Tibial artery (tissue), 4 donors: ENCODE measurements at regions of chr17 and their contacts with region 1.

Region 1: DNA sequence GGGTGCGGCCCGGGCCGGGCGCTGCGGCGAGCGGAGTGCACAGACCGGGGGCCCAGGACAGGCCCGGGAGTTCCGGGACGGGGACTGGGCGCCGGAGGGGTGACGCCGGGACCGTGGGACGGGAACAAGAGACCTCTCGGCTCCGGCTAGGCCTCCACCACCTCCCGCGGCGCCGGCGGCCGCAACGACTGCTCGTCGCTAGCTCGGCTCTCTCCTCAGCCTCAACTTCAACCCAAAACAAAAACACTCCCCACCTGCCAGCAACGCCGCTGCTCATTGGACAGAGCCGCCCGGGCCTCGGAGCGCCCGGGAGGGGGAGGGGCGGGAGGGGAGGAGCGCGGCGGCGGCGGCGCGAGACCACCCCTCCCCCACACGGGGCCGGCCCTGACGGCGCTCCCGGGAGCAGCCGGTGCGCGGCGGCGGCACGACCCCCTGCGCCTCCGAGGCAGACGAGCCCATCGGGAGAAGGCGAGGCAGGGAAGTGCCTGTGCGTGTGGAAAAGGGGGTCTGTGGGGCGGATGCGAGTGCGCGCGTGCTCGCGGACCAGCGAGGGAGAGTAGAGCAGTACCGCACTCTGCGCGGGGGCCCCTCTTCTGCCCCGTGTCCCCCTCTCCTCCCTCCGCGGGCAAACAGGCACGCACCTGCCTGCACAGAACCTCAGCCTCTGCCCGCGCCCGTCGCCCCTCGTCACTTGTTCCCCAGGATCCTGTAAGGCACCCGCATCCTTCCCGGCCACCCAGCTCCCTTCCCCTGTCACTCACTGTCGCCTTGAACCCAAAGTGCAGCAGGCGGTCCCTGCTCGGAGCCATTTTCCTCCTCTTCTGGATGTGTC is at the start of gene FBXL20:
- DNase-seq: peak; percentile 95 to 96
- H3K4me3 ChIP-seq: peak within 1 kb of the TSS; percentile 85
- H3K27ac ChIP-seq: peak within 1 kb of the TSS; percentile 90 to 97
- H3K4me1 ChIP-seq: peaks cover 0 to 35% (median 15%) of the 10 kb centered on the region in 4 donors
- H3K27me3 ChIP-seq: no peaks in the 10 kb centered on the region
- CTCF ChIP-seq: no peak

Region 2: GRCh38 chr17:39252788-39253460 is 148.7 kb before region 1 on chr17:
- intact Hi-C with region 1: loop called (anchors 10 kb)
- DNase-seq: peak in 1 of 2 donors; percentile 20
- H3K4me3 ChIP-seq: no peak overlapping the region
- H3K27ac ChIP-seq: no peak overlapping the region
- H3K4me1 ChIP-seq: no peaks in the 10 kb centered on the region
- H3K27me3 ChIP-seq: no peaks in the 10 kb centered on the region
- CTCF ChIP-seq: no peak

Region 3: GRCh38 chr17:39450847-39451581 is 49.4 kb after region 1 on chr17 and contains the start of gene MED1:
- intact Hi-C with region 1: loop called (anchors 10 kb)
- DNase-seq: peak; percentile 93 to 96
- H3K4me3 ChIP-seq: peak within 1 kb of the TSS; percentile 73 to 88
- H3K27ac ChIP-seq: peak within 1 kb of the TSS; percentile 88 to 91
- H3K4me1 ChIP-seq: peaks cover 0 to 29% (median 14%) of the 10 kb centered on the region in 4 donors
- H3K27me3 ChIP-seq: no peaks in the 10 kb centered on the region
- CTCF ChIP-seq: no peak

Region 4: DNA sequence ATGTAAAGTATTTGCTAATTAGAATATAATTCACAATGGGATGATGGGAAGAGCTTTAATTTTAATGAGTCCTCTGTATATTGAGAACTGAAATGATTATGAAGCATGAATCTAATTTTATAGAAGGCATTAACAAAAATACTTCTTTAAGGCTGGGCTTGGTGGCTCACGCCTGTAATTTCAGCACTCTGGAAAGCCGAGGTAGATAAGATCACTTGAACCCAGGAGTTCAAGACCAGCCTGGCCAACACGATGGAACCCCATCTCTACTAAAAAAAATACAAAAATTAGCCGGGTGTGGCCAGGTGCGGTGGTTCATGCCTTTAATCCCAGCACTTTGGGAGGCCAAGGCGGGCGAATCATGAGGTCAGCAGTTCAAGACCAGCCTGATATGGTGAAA is 71.7 kb after region 1 on chr17:
- intact Hi-C with region 1: no loop called
- DNase-seq: peak in 1 of 2 donors; percentile 15
- H3K4me3 ChIP-seq: no peak overlapping the region
- H3K27ac ChIP-seq: no peak overlapping the region
- H3K4me1 ChIP-seq: no peaks in the 10 kb centered on the region
- H3K27me3 ChIP-seq: no peaks in the 10 kb centered on the region
- CTCF ChIP-seq: no peak